ENCODE measurements at regions of chr1 and their contacts with region 1.

Region 1: GRCh38 chr1:154220071-154220969 is at the start of gene UBAP2L:
- DNase-seq: peak; percentile 96 to 100
- H3K4me3 ChIP-seq: peak within 1 kb of the TSS; percentile 78 to 98
- H3K27ac ChIP-seq: peak within 1 kb of the TSS; percentile 96 to 98
- H3K4me1 ChIP-seq: peaks cover 20 to 25% of the 10 kb centered on the region in 2 donors
- H3K27me3 ChIP-seq: no peaks in the 10 kb centered on the region
- CTCF ChIP-seq: no peak
- total RNA-seq, gene UBAP2L: 67.8 TPM

Region 2: GRCh38 chr1:154183045-154183915 is 37.0 kb before region 1 on chr1:
- intact Hi-C with region 1: loop called (anchors 1 kb)
- DNase-seq: peak; percentile 85 to 98
- H3K4me3 ChIP-seq: peak overlapping the region; percentile 76 to 88
- H3K27ac ChIP-seq: peak overlapping the region; percentile 81 to 89
- H3K4me1 ChIP-seq: peaks cover 17 to 32% of the 10 kb centered on the region in 2 donors
- H3K27me3 ChIP-seq: no peaks in the 10 kb centered on the region
- CTCF ChIP-seq: peak in 1 of 3 experiments; percentile 23

Region 3: GRCh38 chr1:154607609-154608396 is 387.5 kb after region 1 on chr1 and contains the start of gene ADAR:
- intact Hi-C with region 1: loop called (anchors 2 kb)
- DNase-seq: peak; percentile 68 to 97
- H3K4me3 ChIP-seq: peak within 1 kb of the TSS; percentile 73 to 95
- H3K27ac ChIP-seq: peak within 1 kb of the TSS; percentile 96
- H3K4me1 ChIP-seq: peaks cover 0 to 24% of the 10 kb centered on the region in 2 donors
- H3K27me3 ChIP-seq: no peaks in the 10 kb centered on the region
- CTCF ChIP-seq: no peak
- total RNA-seq, gene ADAR: 65.3 TPM

Measured in ascending aorta (tissue), 2 donors.